HepG2 (cell line): ENCODE measurements at regions of chrX and their contacts with region 1.

Region 1: GRCh38 chrX:68196939-68197791 is 236.1 kb downstream of the OPHN1 start:
- DNase-seq: peak; percentile 31
- ATAC-seq: peak; percentile 81
- H3K4me3 ChIP-seq: no peak overlapping the region
- H3K27ac ChIP-seq: no peak overlapping the region
- H3K4me1 ChIP-seq: no peaks in the 10 kb centered on the region
- H3K27me3 ChIP-seq: no peaks in the 10 kb centered on the region
- CTCF ChIP-seq: peak; percentile 78
- EP300 ChIP-seq: no peak
- POLR2A ChIP-seq: no peak
- RAD21 ChIP-seq: peak; percentile 69

Region 2: GRCh38 chrX:68490599-68490998 is 293.4 kb after region 1 on chrX:
- CTCF ChIA-PET with region 1: interaction called, 7 read pairs
- POLR2A ChIA-PET with region 1: no interaction called
- in situ Hi-C with region 1: loop called (anchors 10 kb)
- intact Hi-C with region 1: loop called (anchors 1 kb)
- DNase-seq: peak; percentile 58
- ATAC-seq: peak; percentile 98
- H3K4me3 ChIP-seq: peak overlapping the region in 2 of 3 experiments; percentile 3 to 43; a peak in 1 of 6 replicates
- H3K27ac ChIP-seq: peak overlapping the region; percentile 50
- H3K4me1 ChIP-seq: peaks cover 26% of the 10 kb centered on the region
- H3K27me3 ChIP-seq: no peaks in the 10 kb centered on the region
- CTCF ChIP-seq: peak; percentile 62
- EP300 ChIP-seq: no peak
- POLR2A ChIP-seq: no peak
- RAD21 ChIP-seq: peak; percentile 32; the same call in 1 of the 2 replicates

Region 3: DNA sequence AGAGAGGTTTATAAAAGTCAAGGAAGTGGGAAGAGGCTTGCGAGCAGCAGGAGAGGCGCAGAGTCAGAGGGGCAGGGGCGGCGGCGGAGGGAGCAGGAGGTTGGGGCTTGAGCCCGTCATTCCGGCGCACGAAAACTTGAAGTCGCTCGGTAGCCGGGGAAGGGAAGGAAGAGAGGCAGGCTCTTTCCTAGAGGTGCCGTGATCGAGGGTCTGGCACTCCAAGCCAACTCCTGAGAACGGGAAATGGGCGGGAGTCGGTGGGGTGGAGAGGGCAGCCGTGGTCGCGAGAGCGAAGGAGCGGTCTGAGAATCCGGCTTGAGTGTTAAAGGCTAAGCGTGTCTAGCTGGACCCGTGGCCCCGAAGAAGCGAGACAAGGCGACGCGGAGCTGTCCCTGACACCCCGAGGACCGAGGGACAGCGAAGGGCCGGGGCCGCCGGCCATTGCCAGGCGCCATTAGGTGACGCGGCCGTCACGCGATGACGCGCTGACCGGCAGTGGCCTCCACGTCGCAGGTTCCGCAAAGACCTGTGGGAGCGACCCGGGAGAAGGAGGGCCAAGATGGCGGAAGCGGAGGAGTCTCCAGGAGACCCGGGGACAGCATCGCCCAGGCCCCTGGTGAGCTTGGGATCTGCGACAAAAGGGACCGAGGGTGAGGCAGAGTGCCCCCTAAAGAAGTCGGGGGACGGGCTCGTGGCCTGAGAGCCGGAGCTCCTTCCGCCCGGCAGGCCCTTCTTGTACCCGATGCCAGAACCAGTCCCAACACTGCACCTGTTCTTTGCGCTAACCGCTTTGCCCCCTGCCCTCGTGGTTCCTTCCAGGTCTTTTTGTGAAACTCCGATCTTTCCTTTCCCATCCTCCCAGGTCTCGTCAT is 301.6 kb after region 1 on chrX and contains the start of gene YIPF6:
- CTCF ChIA-PET with region 1: no interaction called
- POLR2A ChIA-PET with region 1: no interaction called
- in situ Hi-C with region 1: loop called (anchors 10 kb)
- intact Hi-C with region 1: no loop called
- DNase-seq: peak; percentile 55
- ATAC-seq: peak; percentile 97
- H3K4me3 ChIP-seq: peak within 1 kb of the TSS; percentile 85 to 94 (median 87)
- H3K27ac ChIP-seq: peak within 1 kb of the TSS; percentile 95
- H3K4me1 ChIP-seq: peaks cover 40% of the 10 kb centered on the region
- H3K27me3 ChIP-seq: no peaks in the 10 kb centered on the region; a peak in 1 of 5 replicates
- CTCF ChIP-seq: no peak
- EP300 ChIP-seq: no peak
- POLR2A ChIP-seq: peak; percentile 93 to 94
- RAD21 ChIP-seq: no peak
- total RNA-seq, gene YIPF6: 36.7 and 43.6 TPM in 2 replicates

Region 4: GRCh38 chrX:68699960-68700746 is 503.0 kb after region 1 on chrX:
- CTCF ChIA-PET with region 1: no interaction called
- POLR2A ChIA-PET with region 1: no interaction called
- in situ Hi-C with region 1: no loop called
- intact Hi-C with region 1: loop called (anchors 5 kb)
- DNase-seq: no peak
- ATAC-seq: no peak
- H3K4me3 ChIP-seq: no peak overlapping the region
- H3K27ac ChIP-seq: no peak overlapping the region
- H3K4me1 ChIP-seq: peaks cover 41% of the 10 kb centered on the region
- H3K27me3 ChIP-seq: no peaks in the 10 kb centered on the region; a peak in 1 of 5 replicates
- CTCF ChIP-seq: no peak
- EP300 ChIP-seq: no peak
- POLR2A ChIP-seq: no peak
- RAD21 ChIP-seq: no peak

Region 5: DNA sequence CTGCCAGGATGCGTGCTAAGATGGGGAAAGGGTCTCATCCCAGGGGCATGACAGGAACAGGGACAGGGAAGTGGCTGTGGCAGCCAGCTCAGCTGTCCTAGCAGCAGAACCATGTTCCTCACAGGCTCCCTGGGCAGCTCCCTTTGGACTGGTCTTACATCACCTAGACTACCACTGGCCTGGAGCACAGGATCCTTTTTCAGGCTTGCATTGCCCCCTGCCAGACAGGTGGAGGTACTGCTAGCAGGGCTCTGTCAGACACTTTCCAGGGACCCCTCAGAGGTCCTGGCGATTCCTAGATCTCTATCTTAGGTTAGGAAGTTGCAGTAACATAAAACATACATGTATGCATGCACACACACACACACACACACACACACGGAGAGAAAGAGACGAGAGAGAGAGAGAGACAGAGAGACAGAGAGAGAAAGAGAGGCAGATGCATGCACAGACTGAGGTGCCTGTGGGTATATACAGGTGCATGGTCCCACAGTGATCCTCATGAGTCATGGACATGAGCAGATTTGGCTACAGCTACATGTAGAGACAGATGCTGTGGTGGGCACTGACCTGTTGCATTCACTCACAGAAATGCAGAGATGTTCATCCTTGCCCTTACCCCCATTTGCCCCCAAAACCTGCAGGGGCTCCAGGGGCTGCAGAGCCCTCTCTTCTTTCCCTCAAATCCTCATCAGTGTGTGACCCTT is 513.9 kb after region 1 on chrX:
- CTCF ChIA-PET with region 1: interaction called, 4 read pairs
- POLR2A ChIA-PET with region 1: no interaction called
- in situ Hi-C with region 1: loop called (anchors 5 kb)
- intact Hi-C with region 1: loop called (anchors 1 kb)
- DNase-seq: peak; percentile 40
- ATAC-seq: peak; percentile 97
- H3K4me3 ChIP-seq: no peak overlapping the region
- H3K27ac ChIP-seq: no peak overlapping the region
- H3K4me1 ChIP-seq: no peaks in the 10 kb centered on the region
- H3K27me3 ChIP-seq: no peaks in the 10 kb centered on the region
- CTCF ChIP-seq: peak; percentile 84
- EP300 ChIP-seq: no peak
- POLR2A ChIP-seq: no peak
- RAD21 ChIP-seq: peak; percentile 75